ENCODE measurements at regions of chr9 and their contacts with region 1.

Region 1: GRCh38 chr9:70413798-70414775 is at the start of gene KLF9:
- DNase-seq: peak; percentile 95
- ATAC-seq: peak; percentile 76
- H3K4me3 Mint-ChIP-seq: peak within 1 kb of the TSS; percentile 99
- H3K27ac Mint-ChIP-seq: peak within 1 kb of the TSS; percentile 100
- H3K4me1 Mint-ChIP-seq: peaks cover 38% of the 10 kb centered on the region
- H3K27me3 Mint-ChIP-seq: no peaks in the 10 kb centered on the region
- total RNA-seq, gene KLF9: 20.2 to 22.3 TPM

Region 2: DNA sequence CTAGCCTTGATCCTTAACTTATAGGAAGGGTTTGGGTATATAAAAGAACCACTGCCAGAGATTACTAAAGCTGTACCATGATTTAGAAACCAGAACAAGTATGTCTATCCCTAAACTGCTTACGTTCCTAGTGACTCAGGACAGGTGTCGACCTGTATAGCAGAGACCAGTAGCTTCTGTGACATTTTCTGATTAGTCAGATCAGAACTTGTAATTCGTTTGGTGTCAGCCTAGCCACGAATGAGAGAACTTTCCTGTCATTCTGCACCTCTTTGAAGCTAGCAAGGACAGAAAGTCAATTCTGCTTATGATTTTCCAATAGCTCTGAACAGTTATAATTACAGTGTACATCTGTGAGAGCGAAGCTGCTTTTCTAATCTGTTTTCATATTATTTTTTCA is 1439.7 kb before region 1 on chr9:
- CTCF ChIA-PET with region 1: no interaction called
- POLR2A ChIA-PET with region 1: no interaction called
- intact Hi-C with region 1: loop called in 1 of 2 experiments (anchors 10 kb)
- DNase-seq: peak; percentile 58
- ATAC-seq: peak; percentile 95
- H3K4me3 Mint-ChIP-seq: peak overlapping the region; percentile 8
- H3K27ac Mint-ChIP-seq: peak overlapping the region; percentile 77
- H3K4me1 Mint-ChIP-seq: peaks cover 48% of the 10 kb centered on the region
- H3K27me3 Mint-ChIP-seq: peaks cover 3% of the 10 kb centered on the region

Region 3: GRCh38 chr9:69759421-69760277 is 654.4 kb before region 1 on chr9 and contains the start of gene PTAR1:
- CTCF ChIA-PET with region 1: no interaction called
- POLR2A ChIA-PET with region 1: no interaction called
- intact Hi-C with region 1: loop called in 1 of 2 experiments (anchors 2 kb)
- DNase-seq: peak; percentile 95
- ATAC-seq: peak; percentile 87
- H3K4me3 Mint-ChIP-seq: peak within 1 kb of the TSS; percentile 94
- H3K27ac Mint-ChIP-seq: peak within 1 kb of the TSS; percentile 94
- H3K4me1 Mint-ChIP-seq: peaks cover 27% of the 10 kb centered on the region
- H3K27me3 Mint-ChIP-seq: no peaks in the 10 kb centered on the region
- total RNA-seq, gene PTAR1: 35.2 to 37.1 TPM

Region 4: GRCh38 chr9:70466976-70467561 is 53.0 kb after region 1 on chr9:
- CTCF ChIA-PET with region 1: no interaction called
- POLR2A ChIA-PET with region 1: interaction called, 3 read pairs
- intact Hi-C with region 1: loop called in 1 of 2 experiments (anchors 1 kb)
- DNase-seq: peak; percentile 71
- ATAC-seq: peak; percentile 92
- H3K4me3 Mint-ChIP-seq: no peak overlapping the region
- H3K27ac Mint-ChIP-seq: peak overlapping the region; percentile 51
- H3K4me1 Mint-ChIP-seq: peaks cover 55% of the 10 kb centered on the region
- H3K27me3 Mint-ChIP-seq: no peaks in the 10 kb centered on the region

Region 5: GRCh38 chr9:70602321-70603019 is 188.4 kb after region 1 on chr9:
- CTCF ChIA-PET with region 1: interaction called, 25 read pairs
- POLR2A ChIA-PET with region 1: interaction called, 4 read pairs
- intact Hi-C with region 1: loop called (anchors 1 to 5 kb)
- DNase-seq: peak; percentile 60
- ATAC-seq: peak; percentile 78
- H3K4me3 Mint-ChIP-seq: no peak overlapping the region
- H3K27ac Mint-ChIP-seq: no peak overlapping the region
- H3K4me1 Mint-ChIP-seq: no peaks in the 10 kb centered on the region
- H3K27me3 Mint-ChIP-seq: no peaks in the 10 kb centered on the region

Region 6: GRCh38 chr9:71911253-71912074 is 1497.4 kb after region 1 on chr9 and contains the start of gene C9orf85:
- CTCF ChIA-PET with region 1: no interaction called
- POLR2A ChIA-PET with region 1: no interaction called
- intact Hi-C with region 1: loop called (anchors 2 kb)
- DNase-seq: peak; percentile 98
- ATAC-seq: peak; percentile 94
- H3K4me3 Mint-ChIP-seq: peak within 1 kb of the TSS; percentile 98
- H3K27ac Mint-ChIP-seq: peak within 1 kb of the TSS; percentile 94
- H3K4me1 Mint-ChIP-seq: peaks cover 59% of the 10 kb centered on the region
- H3K27me3 Mint-ChIP-seq: no peaks in the 10 kb centered on the region
- total RNA-seq, gene C9orf85: 10.2 to 10.4 TPM

Measured in activated CD4-positive, alpha-beta T cell treated with anti-CD3 and anti-CD28 coated beads for 36 hours (primary cell).